WTC11 (cell line): ENCODE measurements at regions of chr7 and their contacts with region 1.

Region 1: DNA sequence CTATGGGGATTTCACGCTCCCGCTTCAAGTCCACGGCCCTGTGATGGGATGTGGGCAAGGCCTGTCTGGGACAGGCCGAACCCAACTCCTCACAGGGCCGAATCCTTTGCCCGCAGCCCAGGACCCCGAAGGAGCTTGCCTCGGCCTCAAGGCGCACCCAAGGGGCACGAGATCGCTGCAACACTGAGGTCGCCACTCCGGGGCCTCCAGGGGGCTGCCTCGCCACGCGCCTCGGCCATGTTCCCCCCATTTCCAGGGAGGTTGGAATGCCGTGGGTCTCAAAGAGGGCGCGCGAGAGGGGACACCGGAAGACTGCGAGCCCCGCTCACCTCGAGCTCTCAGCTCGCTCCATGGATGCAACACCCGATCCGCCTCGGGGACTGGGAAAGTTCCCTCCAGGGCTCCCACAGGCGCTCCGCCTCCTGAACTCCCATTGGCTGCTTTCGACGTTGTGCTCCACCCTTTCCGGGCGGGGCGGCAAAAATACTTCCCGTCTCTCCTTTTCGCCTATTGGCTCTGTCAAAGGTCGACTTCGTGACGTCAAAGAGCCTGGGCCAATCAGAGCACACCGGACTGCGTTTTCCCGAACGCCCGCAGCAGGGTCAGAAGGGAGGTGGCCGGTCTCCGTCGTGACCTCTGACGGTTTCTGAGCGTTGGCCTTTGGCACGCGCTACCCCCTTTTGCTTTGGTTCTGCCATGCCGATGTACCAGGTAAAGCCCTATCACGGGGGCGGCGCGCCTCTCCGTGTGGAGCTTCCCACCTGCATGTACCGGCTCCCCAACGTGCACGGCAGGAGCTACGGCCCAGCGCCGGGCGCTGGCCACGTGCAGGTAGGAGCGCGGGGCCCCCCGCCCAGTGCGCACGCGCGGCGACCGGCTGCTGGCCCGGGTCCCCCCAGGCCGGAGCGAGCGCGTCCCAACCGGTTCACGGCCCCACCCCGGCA is at the starts of genes AIMP2 and PMS2:
- DNase-seq: peak; percentile 99
- ATAC-seq: peak; percentile 95
- H3K4me3 Mint-ChIP-seq: peak within 1 kb of the TSS; percentile 81
- H3K27ac Mint-ChIP-seq: peak within 1 kb of the TSS; percentile 92
- H3K4me1 Mint-ChIP-seq: peaks cover 18% of the 10 kb centered on the region
- H3K27me3 Mint-ChIP-seq: no peaks in the 10 kb centered on the region
- CTCF ChIP-seq: no peak
- total RNA-seq, gene AIMP2: 63.2 to 69.4 TPM (median 67.8 TPM) in 3 replicates
- total RNA-seq, gene PMS2: 13.7 to 14.8 TPM (median 14.6 TPM) in 3 replicates

Region 2: DNA sequence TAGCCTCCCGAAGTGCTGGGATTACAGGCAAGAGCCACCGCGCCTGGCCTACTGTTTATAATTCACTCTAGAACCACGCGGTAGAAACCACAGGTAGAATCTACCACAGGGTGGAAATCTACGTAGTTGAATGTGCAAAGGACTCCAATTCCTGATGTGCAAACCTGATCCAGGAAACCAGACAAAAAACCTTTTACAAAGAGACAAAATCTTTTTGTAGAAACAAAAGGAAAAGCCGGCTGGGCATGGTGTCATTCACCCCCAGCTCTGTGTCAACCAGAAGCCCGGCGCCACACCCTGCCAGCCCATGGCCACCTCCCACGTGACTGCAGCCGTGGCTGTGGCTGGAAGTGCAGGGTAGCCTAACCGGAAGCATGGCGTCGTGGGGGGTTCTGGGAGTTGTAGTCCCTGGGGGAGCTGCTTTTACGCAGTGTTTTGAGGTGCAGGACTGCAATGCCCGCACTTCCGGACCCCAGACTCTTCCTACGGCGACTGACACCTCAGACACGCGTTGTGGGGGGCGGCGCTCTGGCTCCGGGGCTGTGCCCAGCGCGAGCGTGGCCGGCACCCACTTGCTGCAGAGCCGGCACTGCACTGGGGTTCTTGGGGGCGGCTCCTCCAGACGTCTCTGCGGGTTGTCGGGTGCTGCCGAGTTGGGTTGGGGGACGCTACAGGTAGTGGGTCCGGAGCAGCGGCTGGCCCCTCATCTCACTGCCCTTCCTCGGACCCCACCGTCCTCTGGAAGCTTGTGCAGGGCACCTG is 186.0 kb before region 1 on chr7:
- CTCF ChIA-PET with region 1: no interaction called
- POLR2A ChIA-PET with region 1: no interaction called
- DNase-seq: peak; percentile 95
- ATAC-seq: peak; percentile 98
- H3K4me3 Mint-ChIP-seq: peak overlapping the region; percentile 87
- H3K27ac Mint-ChIP-seq: no peak overlapping the region
- H3K4me1 Mint-ChIP-seq: peaks cover 4% of the 10 kb centered on the region
- H3K27me3 Mint-ChIP-seq: peaks cover 4% of the 10 kb centered on the region
- CTCF ChIP-seq: no peak

Region 3: DNA sequence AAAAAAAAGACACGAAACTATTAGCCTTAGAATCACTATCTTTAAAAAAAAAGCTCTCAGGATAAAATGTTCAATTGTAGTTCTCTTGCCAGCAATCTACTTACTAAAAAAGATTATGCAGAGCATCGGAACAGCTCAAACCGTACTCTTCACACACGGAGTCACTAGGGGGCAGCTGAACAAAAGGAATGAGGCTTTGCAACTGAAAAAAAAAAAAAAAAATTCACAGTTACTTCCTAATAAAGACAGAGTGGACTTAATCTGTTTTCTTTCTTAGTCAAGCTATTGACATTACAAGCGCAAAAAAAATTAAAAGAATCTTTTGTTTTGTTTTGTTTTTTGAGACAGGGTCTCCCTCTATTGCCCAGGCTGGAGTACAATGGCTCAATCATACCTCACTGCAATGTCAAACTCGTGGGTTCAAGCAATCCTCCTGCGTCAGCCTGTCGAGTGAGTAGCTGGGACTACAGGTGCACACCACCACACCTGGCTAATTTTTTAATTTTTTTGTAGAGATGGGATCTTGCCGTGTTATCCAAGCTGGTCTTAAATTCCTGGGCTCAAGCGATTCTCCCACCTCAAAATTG is 11.6 kb before region 1 on chr7:
- CTCF ChIA-PET with region 1: interaction called, 11 read pairs
- POLR2A ChIA-PET with region 1: interaction called, 4 read pairs
- DNase-seq: peak; percentile 18
- ATAC-seq: no peak
- H3K4me3 Mint-ChIP-seq: no peak overlapping the region
- H3K27ac Mint-ChIP-seq: no peak overlapping the region
- H3K4me1 Mint-ChIP-seq: no peaks in the 10 kb centered on the region
- H3K27me3 Mint-ChIP-seq: no peaks in the 10 kb centered on the region
- CTCF ChIP-seq: no peak